Heart left ventricle (tissue), 16 donors: ENCODE measurements at regions of chr12 and their contacts with region 1.

Region 1: DNA sequence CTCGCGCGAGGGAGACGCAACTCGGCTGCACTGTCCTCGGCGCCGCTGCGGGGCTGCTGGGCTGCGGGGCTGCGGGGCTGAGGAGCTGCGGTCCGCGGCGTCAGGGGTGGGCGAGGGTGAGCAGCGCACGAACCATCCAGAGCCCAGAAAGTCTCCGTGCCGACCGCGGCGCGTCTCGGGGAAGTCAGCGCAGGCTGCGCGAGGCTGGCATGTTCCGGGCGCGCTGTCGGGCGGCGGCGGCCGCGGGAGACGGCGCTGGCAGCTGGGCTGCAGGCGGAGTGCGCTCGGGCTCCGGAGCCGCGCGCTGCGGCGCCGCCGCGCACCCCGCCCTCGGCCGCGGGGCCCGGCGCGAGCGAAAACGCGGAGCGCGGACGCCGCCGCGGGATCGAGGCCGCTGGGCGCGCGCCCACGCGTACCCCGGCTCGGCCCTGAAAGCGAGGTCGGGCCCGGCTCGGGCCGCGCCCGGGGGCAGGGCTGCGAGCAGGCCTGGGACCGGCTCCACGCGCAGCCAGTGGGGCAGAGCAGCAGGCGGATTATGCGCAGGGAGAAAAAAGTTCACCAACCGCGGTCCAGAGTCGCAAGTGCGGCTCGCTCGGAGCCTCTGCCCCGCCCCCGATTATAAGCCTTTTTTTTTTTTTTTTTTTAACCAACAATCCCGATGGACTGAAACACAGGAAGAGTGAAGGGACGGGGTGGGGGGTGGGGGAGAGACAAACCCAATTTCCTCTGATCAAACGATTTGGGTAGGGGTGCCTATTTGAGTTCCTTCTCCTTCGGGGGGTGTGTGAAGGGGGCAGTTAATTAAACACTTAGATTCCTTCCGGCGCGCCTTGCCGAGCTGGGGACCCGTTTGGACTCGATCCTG is at the start of gene PRICKLE1:
- DNase-seq: peak; percentile 43 to 73 (median 56)
- ATAC-seq: peak; percentile 47 to 85 (median 68)
- H3K4me3 ChIP-seq: peak within 1 kb of the TSS; percentile 74 to 98 (median 87)
- H3K27ac ChIP-seq: peak within 1 kb of the TSS in 11 of 12 donors; percentile 40 to 90 (median 84)
- H3K4me1 ChIP-seq: peaks cover 0 to 38% (median 21%) of the 10 kb centered on the region in 12 donors
- H3K27me3 ChIP-seq: peaks cover 0 to 33% (median 0%) of the 10 kb centered on the region in 9 donors
- CTCF ChIP-seq: no peak
- POLR2A ChIP-seq: peak in 1 of 2 donors; percentile 20
- total RNA-seq, gene PRICKLE1: 15.5 to 39.2 (median 21.1) TPM

Region 2: GRCh38 chr12:42129595-42130204 is 460.0 kb before region 1 on chr12:
- intact Hi-C with region 1: loop called in 1 of 10 experiments (anchors 10 kb)
- DNase-seq: peak in 1 of 5 donors; percentile 17
- ATAC-seq: peak; percentile 54 to 84 (median 74)
- H3K4me3 ChIP-seq: no peak overlapping the region
- H3K27ac ChIP-seq: no peak overlapping the region
- H3K4me1 ChIP-seq: peaks cover 0 to 34% (median 13%) of the 10 kb centered on the region in 12 donors
- H3K27me3 ChIP-seq: no peaks in the 10 kb centered on the region
- CTCF ChIP-seq: peak; percentile 66 to 91 (median 86)
- POLR2A ChIP-seq: no peak

Region 3: DNA sequence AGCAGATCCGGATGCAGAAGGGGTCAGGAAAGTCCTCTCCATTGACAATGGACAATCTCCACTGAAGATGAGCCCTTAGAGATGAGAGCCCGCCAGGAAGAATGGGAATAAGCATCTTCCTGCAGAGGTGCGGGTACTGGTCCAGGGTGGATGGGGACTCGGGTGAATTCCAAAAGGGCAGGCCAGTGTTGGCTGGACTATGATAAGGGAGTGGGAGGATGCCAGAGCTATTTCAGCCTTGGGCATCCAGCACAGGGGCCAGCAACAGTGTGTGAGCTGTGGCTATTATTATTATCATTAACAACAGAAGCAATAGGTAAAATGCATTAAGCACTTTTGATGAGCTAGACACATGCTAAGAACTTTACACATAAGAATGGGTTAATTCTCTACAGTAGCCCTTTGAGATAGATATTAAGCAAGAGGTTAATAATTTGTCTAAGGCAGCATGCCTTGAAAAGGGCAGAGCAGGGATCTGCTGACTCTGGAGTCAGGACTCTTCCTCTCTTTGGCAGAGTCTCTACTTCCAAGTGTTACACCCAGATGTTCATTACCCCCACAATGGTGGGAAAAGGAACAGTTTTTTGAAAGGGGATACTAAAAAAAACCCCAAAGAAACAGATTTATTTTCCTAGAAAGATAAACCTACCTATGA is 55.4 kb before region 1 on chr12:
- intact Hi-C with region 1: no loop called
- DNase-seq: peak in 3 of 5 donors; percentile 16 to 35 (median 29)
- ATAC-seq: peak; percentile 64 to 89 (median 80)
- H3K4me3 ChIP-seq: no peak overlapping the region
- H3K27ac ChIP-seq: no peak overlapping the region
- H3K4me1 ChIP-seq: peaks cover 0 to 17% (median 0%) of the 10 kb centered on the region in 12 donors
- H3K27me3 ChIP-seq: no peaks in the 10 kb centered on the region
- CTCF ChIP-seq: no peak
- POLR2A ChIP-seq: no peak

Region 4: DNA sequence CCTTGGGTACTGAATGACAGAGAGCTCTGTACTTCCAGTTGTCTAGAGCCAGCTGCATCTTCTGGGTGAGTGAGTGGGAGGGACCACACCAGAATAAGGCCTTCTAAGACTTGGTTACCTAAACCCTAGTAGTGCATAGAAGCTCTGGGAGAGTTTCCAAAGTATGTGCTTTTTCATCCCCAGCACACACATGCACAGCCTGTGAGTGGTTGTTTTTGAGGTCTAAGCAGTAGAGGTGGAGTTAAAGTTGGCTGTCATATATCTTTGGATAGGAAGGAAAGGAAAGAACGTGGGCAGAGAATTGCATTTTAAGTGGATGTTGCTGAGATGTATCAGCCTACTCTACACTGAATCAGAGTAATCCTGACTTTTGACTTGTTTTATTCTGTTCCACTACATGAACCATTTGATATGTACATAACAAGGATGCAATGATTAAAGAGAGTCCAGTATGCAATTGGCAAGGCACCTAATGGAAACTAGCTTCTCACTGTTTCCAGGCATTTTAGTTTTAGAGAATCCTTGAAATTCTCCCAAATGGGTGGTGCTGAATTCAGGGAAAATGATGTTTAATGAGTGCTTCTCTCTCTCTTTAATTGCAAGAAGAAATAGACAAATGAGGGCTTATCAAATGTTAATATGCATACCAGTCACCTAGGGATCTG is 51.7 kb after region 1 on chr12:
- intact Hi-C with region 1: no loop called
- DNase-seq: no peak
- ATAC-seq: no peak
- H3K4me3 ChIP-seq: no peak overlapping the region
- H3K27ac ChIP-seq: no peak overlapping the region
- H3K4me1 ChIP-seq: no peaks in the 10 kb centered on the region
- H3K27me3 ChIP-seq: no peaks in the 10 kb centered on the region
- CTCF ChIP-seq: no peak
- POLR2A ChIP-seq: no peak

Region 5: DNA sequence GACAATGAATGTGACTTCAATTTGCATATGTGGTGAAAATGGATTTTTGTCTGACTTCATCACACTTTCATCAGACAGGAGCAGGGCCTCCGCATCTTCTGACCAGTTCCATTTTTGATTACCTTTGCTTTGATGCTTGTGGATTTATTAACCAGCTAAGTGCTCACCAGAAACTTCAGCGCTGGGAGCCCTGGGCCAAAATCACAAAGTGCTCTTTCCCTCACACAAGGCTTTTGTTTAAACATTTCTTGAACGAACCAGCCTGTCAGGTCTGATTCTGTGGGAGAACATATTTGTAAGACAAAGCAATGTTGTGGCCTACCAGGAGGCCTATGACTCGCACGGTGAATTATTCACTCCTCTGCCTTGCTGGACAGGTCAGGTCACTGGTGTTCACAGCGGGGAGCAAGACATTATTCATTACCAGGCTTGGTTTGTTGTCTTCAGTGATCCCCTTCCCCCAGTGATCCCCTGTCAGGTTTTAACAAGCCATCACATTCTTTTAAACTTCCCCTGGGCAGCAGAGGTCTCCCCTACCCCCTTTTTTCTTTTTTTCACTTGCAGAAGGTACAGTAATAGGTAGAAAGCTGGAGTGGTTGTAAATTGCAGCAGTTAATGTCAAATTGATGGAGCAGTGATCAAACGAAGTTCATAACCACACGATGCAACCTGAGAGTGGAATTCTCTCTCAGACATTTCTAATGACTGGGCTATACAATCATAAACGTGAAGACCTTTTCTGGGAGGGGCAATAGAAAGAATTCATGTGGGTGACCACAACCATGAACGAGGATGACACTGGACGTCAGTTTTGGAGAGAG is 167.4 kb after region 1 on chr12:
- intact Hi-C with region 1: loop called in 1 of 10 experiments (anchors 5 kb)
- DNase-seq: no peak
- ATAC-seq: no peak
- H3K4me3 ChIP-seq: no peak overlapping the region
- H3K27ac ChIP-seq: no peak overlapping the region
- H3K4me1 ChIP-seq: peaks cover 0 to 22% (median 11%) of the 10 kb centered on the region in 12 donors
- H3K27me3 ChIP-seq: no peaks in the 10 kb centered on the region
- CTCF ChIP-seq: no peak
- POLR2A ChIP-seq: no peak

Region 6: DNA sequence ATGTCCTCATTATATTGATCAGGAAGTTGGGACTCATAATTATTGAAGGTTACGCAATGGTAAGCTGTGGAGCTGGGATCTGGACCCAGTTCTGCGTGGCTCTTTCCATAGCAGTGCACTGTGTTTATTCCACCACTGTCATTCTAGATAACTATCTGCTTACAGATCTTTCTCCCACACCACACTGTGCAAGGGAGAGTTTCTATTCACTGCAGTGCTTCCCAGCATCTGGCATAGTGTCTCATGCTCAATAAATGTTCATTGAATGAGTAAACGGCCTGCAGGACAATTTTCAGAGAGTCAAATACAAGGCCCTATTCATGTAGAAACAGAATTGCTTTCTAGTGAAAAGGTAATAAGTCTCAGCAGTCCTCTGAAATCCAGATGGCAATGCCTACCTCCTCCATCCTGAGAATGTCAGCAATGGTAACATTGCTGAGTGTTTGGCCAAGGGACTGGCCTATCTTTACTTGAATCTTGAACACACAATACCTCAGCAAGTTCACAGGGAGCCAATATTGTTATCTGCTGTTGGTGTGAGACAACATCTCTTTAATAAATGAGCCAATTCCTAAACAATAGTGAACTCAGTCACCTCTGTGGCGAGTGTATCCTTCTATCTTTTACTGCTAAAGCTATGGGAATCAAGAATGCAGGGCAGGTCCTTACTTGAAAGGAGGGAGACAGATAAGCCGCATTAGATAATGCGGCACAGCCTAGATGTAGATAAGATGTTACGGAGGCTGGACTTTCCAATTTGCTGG is 332.2 kb after region 1 on chr12:
- intact Hi-C with region 1: loop called in 1 of 10 experiments (anchors 5 kb)
- DNase-seq: no peak
- ATAC-seq: no peak
- H3K4me3 ChIP-seq: no peak overlapping the region
- H3K27ac ChIP-seq: no peak overlapping the region
- H3K4me1 ChIP-seq: peaks cover 0 to 18% (median 0%) of the 10 kb centered on the region in 12 donors
- H3K27me3 ChIP-seq: no peaks in the 10 kb centered on the region
- CTCF ChIP-seq: no peak
- POLR2A ChIP-seq: no peak

Region 7: GRCh38 chr12:42977451-42978230 is 387.9 kb after region 1 on chr12:
- intact Hi-C with region 1: loop called in 2 of 10 experiments (anchors 5 to 10 kb)
- DNase-seq: no peak
- ATAC-seq: no peak
- H3K4me3 ChIP-seq: no peak overlapping the region
- H3K27ac ChIP-seq: peak overlapping the region in 4 of 12 donors; percentile 28 to 82 (median 60)
- H3K4me1 ChIP-seq: peaks cover 0 to 27% (median 0%) of the 10 kb centered on the region in 12 donors
- H3K27me3 ChIP-seq: no peaks in the 10 kb centered on the region
- CTCF ChIP-seq: no peak
- POLR2A ChIP-seq: no peak

Region 8: DNA sequence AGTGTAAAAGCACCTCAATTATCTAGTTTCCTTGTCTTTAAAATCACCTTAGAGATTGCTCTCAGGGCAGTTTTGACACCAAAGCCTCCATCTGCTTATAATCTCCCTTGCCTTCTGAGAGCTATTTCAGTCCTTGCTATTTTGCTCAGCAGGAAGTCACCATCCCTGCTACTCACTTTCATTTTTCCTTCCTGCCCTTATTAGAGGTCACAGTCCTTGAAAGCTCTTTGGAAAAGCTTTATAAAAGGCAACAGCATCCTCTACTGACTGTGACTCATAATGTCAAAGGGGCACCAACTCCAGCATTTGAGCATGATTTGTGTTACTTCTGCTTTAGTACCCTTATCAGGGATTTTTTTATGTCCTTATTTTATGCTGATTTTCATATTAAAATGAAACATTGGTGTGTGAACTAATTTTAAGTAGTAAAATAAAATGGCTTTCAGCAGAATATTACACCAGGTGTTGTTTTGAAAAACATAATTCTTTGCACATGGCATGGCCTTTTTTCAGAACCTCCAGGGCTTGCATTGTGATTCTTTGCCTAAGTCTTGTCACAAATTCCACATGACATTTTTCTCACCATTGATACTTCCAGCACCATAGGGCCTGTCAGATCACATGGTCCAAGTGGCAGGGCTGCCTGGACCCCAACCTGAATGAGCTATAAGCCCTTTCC is 749.3 kb after region 1 on chr12:
- intact Hi-C with region 1: loop called in 8 of 10 experiments (anchors 1 to 10 kb)
- DNase-seq: peak in 1 of 5 donors; percentile 22
- ATAC-seq: peak; percentile 74 to 99 (median 98)
- H3K4me3 ChIP-seq: no peak overlapping the region
- H3K27ac ChIP-seq: peak overlapping the region in 9 of 12 donors; percentile 12 to 58 (median 47)
- H3K4me1 ChIP-seq: peaks cover 0 to 16% (median 8%) of the 10 kb centered on the region in 12 donors
- H3K27me3 ChIP-seq: no peaks in the 10 kb centered on the region
- CTCF ChIP-seq: peak in 11 of 12 donors; percentile 47 to 83 (median 70)
- POLR2A ChIP-seq: no peak